Aorta (tissue), 5 donors: ENCODE measurements at regions of chr7 and their contacts with region 1.

Region 1: DNA sequence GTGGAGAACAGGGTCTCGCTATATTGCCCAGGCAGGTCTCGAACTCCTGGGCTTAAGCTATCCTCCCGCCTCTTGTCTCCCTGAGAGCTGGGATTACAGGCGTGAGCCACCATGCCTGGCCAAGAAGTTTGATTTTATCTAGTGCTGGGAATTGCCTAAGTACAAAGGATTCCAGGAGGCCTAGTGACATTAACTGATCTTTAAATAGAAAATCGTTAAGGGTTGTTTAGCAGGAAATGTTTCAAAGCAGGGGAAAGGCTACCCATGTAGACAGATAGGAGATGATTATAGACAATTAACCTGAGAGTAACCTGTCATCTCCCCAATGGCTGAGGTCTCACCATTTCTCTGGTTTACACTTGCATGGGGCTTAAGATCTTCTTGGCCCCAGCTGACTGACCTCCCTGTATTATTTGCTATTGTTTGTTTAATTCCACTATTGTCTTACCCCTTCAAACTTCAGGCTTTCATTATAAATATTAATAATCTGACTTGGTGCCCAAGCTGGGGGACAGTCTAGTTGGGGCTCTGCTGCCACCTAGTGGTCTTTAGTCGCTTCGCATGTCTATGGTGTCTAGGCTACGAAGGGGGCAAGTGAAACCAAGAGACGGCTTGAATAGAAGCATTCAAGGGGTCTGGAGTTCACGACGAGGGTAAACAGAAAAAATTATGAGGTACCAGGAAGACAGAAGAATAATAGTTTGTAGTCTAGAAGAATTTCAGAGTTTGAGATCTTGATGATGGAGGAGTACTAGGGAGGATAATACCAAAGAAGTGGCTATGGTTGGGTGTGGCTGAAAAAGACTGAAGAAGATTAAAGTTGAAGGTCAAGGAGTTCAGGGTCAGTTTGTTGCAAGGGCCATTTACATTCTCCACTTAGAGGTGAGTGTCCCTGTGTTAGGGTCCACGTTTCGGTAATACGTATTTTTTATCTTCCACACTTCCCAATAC is 40.4 kb upstream of the BPGM start:
- DNase-seq: peak in 1 of 2 donors; percentile 67
- ATAC-seq: peak; percentile 93
- H3K4me3 ChIP-seq: no peak overlapping the region
- H3K27ac ChIP-seq: no peak overlapping the region
- H3K4me1 ChIP-seq: no peaks in the 10 kb centered on the region
- H3K27me3 ChIP-seq: no peaks in the 10 kb centered on the region

Region 2: GRCh38 chr7:134432296-134433152 is 173.7 kb before region 1 on chr7:
- intact Hi-C with region 1: loop called (anchors 1 to 2 kb)
- DNase-seq: peak; percentile 90 to 95
- ATAC-seq: peak; percentile 96
- H3K4me3 ChIP-seq: no peak overlapping the region
- H3K27ac ChIP-seq: peak overlapping the region in 1 of 2 donors; percentile 21
- H3K4me1 ChIP-seq: no peaks in the 10 kb centered on the region
- H3K27me3 ChIP-seq: no peaks in the 10 kb centered on the region

Region 3: GRCh38 chr7:134547397-134548054 is 58.7 kb before region 1 on chr7:
- intact Hi-C with region 1: loop called in 1 of 2 experiments (anchors 2 kb)
- DNase-seq: peak; percentile 81 to 91
- ATAC-seq: peak; percentile 83
- H3K4me3 ChIP-seq: peak overlapping the region; percentile 31 to 36
- H3K27ac ChIP-seq: no peak overlapping the region
- H3K4me1 ChIP-seq: no peaks in the 10 kb centered on the region
- H3K27me3 ChIP-seq: no peaks in the 10 kb centered on the region

Region 4: DNA sequence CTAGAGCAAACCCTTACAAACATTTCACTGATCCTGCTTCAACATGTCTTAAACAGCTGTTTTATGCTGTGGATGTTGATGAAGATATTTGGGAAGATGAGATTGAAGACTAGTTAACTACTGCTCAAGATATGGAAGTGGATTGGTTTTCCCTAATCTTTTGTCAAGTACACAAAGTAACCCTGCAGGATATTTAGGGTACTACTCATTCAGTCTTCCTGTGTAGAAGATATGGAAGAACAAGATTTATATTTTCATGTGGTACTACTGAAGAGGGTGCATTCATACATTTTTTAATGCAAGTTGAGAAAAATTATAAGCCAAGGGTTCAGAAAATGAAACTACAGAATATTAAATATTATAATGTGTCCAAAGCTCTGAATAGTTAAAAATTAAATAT is 523.3 kb after region 1 on chr7:
- intact Hi-C with region 1: no loop called
- DNase-seq: no peak
- ATAC-seq: no peak
- H3K4me3 ChIP-seq: no peak overlapping the region
- H3K27ac ChIP-seq: no peak overlapping the region
- H3K4me1 ChIP-seq: no peaks in the 10 kb centered on the region
- H3K27me3 ChIP-seq: no peaks in the 10 kb centered on the region

Region 5: GRCh38 chr7:135159359-135160085 is 553.3 kb after region 1 on chr7:
- intact Hi-C with region 1: no loop called
- DNase-seq: no peak
- ATAC-seq: no peak
- H3K4me3 ChIP-seq: no peak overlapping the region
- H3K27ac ChIP-seq: no peak overlapping the region
- H3K4me1 ChIP-seq: peaks cover 0 to 9% of the 10 kb centered on the region in 2 donors
- H3K27me3 ChIP-seq: no peaks in the 10 kb centered on the region